Transverse colon (tissue), 4 donors: ENCODE measurements at regions of chr6 and their contacts with region 1.

Region 1: DNA sequence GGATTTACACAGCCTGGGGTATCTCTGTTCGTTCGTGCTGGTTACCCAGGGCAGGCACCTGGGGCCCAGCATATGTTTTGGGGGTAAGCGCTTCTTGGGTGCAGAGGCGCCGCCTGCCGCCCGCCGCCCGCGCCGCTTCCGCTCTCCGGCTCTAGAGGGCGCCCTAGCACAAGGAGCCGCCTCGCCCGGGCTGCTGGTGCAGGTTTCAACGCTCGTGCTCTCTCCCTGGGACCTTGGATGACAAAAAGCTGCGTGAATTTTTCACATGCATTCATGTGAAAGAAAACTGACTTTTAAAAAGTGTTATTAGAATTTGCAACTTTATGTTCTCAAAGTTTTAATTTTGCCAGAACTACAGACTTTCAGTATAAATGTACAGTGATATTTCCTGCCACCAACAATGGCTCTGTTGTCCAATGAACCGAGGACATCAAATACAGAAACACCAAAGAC is 32.5 kb downstream of the PRR18 start:
- DNase-seq: peak; percentile 78
- H3K4me3 ChIP-seq: no peak overlapping the region
- H3K27ac ChIP-seq: no peak overlapping the region
- H3K4me1 ChIP-seq: peaks cover 0 to 8% (median 0%) of the 10 kb centered on the region in 4 donors
- H3K27me3 ChIP-seq: peaks cover 21% of the 10 kb centered on the region
- CTCF ChIP-seq: peak; percentile 92 to 99 (median 98)
- EP300 ChIP-seq: no peak
- POLR2A ChIP-seq: no peak

Region 2: GRCh38 chr6:166365221-166365620 is 89.5 kb after region 1 on chr6:
- in situ Hi-C with region 1: no loop called
- intact Hi-C with region 1: no loop called
- DNase-seq: no peak
- H3K4me3 ChIP-seq: no peak overlapping the region
- H3K27ac ChIP-seq: peak overlapping the region in 1 of 4 donors; percentile 45
- H3K4me1 ChIP-seq: no peaks in the 10 kb centered on the region
- H3K27me3 ChIP-seq: no peaks in the 10 kb centered on the region
- CTCF ChIP-seq: no peak
- EP300 ChIP-seq: no peak
- POLR2A ChIP-seq: no peak

Region 3: DNA sequence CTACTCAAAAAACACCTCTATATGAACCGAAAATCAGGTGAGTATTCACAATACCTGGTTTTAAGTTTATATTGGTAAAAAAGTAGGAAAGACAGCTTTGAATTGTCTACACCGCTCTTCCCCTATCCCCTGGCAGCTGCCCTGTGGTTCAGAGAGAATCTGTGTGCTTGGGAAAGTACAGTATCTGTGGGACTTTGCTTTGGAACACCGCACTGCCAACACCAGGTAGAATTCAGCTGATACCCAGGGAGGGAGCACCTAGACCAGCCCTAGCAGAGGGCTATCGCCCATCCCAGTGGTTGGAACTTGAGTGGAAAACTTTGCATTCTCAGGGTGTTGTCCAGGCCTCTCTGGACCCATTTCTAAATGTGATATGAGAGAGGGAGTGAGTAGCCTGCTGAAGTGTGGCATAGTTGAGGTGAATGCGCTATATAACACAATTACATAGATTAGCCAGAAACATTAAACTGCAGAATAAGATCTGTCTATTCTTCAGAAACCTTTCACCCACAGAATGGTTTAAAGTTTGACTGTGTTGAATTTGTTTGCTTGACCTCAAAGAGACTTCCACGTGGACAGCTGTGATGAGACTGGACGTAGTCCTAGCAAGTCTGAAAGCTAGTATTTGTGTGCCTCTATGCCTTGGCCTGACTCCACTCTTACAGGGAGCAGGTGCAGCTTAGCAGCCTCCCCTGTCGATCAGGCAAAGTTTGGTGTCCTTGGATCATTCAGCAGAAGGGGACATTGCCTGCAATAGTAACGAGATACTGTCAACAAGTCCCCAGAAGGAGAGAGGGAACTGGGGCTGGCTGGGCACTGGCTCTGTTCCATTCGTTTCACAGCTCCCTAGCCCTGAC is 118.5 kb after region 1 on chr6:
- in situ Hi-C with region 1: loop called in 1 of 4 experiments (anchors 10 kb)
- intact Hi-C with region 1: no loop called
- DNase-seq: no peak
- H3K4me3 ChIP-seq: no peak overlapping the region
- H3K27ac ChIP-seq: no peak overlapping the region
- H3K4me1 ChIP-seq: no peaks in the 10 kb centered on the region
- H3K27me3 ChIP-seq: peaks cover 21% of the 10 kb centered on the region
- CTCF ChIP-seq: no peak
- EP300 ChIP-seq: no peak
- POLR2A ChIP-seq: no peak

Region 4: DNA sequence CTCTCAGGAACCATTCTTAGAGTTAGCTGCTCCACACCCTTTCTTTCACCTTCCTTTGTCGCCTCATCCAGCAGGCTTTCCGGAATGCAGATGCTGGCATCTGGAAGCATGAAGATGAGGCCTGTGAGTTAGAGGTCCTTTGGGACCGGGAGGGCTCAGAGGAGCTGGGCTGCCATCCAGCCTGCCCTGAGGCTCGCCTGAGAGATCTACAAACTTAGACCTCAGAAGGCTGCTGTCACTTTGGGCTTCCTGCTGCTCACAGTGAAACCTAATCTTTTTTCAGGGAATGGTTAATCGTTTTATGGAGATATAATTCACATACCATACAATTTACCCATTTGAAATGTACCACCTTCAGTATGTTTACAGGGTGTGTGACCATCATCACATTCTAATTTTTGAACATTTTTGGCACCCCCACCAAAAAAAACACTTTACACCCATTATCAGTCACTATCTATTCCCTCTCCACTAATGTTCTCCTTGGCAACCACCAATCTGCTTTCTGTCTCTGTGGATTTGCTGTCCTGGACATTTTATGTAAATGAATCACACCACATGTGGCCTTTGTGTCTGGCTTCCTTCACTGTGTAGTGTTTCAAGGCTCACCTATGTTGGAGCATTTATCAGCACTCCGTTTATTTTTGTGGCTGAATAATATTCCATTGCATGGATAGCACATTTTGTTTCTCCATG is 127.0 kb after region 1 on chr6:
- in situ Hi-C with region 1: loop called (anchors 5 to 10 kb)
- intact Hi-C with region 1: loop called (anchors 1 kb)
- DNase-seq: no peak
- H3K4me3 ChIP-seq: no peak overlapping the region
- H3K27ac ChIP-seq: no peak overlapping the region
- H3K4me1 ChIP-seq: peaks cover 0 to 6% (median 3%) of the 10 kb centered on the region in 4 donors
- H3K27me3 ChIP-seq: peaks cover 3% of the 10 kb centered on the region
- CTCF ChIP-seq: no peak
- EP300 ChIP-seq: no peak
- POLR2A ChIP-seq: no peak

Region 5: DNA sequence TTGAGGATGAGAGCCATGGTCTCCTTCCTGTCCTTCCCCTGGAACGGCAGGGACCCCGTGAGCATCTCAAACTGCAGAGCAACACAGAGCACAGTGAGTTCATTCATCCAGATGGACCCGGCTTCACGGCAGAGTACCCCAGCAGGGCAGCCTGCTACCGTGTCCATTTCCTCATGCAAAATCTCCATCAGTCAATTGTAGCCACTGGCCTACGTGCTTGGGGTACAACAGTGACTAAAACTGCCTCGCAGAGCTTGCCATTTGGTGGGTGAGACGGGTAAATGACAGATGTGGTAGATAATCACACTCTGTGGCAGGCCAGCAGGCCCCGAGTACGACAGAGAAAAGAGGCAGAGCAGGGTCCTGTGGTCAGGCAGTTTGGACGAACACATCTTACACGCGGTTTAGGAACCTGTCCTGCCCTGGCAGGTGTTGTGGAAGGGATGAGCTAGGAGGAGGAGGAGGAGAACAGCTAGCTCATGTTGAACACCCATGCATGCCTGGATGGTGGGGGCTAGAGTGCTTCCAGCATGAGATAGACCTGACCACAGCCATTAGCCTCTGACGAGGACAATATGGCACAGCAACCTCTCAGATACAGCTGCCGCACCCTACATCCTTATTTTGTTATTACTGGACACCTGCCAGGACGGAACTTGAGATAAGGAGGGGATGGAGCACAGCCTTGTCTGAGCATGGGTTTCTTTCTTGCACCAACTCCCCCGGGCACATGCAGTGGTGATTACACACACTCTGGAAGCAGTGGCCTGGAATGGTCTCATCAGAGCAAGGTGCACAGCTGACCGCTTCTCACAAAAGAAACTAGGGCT is 215.1 kb after region 1 on chr6:
- in situ Hi-C with region 1: no loop called
- intact Hi-C with region 1: no loop called
- DNase-seq: peak; percentile 14
- H3K4me3 ChIP-seq: no peak overlapping the region
- H3K27ac ChIP-seq: no peak overlapping the region
- H3K4me1 ChIP-seq: peaks cover 0 to 14% (median 0%) of the 10 kb centered on the region in 4 donors
- H3K27me3 ChIP-seq: no peaks in the 10 kb centered on the region
- CTCF ChIP-seq: no peak
- EP300 ChIP-seq: no peak
- POLR2A ChIP-seq: no peak

Region 6: GRCh38 chr6:167306400-167306998 is 1030.8 kb after region 1 on chr6:
- in situ Hi-C with region 1: no loop called
- intact Hi-C with region 1: loop called (anchors 5 kb)
- DNase-seq: no peak
- H3K4me3 ChIP-seq: no peak overlapping the region
- H3K27ac ChIP-seq: no peak overlapping the region
- H3K4me1 ChIP-seq: no peaks in the 10 kb centered on the region
- H3K27me3 ChIP-seq: no peaks in the 10 kb centered on the region
- CTCF ChIP-seq: no peak
- EP300 ChIP-seq: no peak
- POLR2A ChIP-seq: no peak